ENCODE measurements at regions of chr15 and their contacts with region 1.

Region 1: GRCh38 chr15:85330901-85331588 is 49.4 kb upstream of the AKAP13 start:
- DNase-seq: peak; percentile 96
- H3K4me3 Mint-ChIP-seq: peak overlapping the region; percentile 58
- H3K27ac Mint-ChIP-seq: peak overlapping the region; percentile 95
- H3K4me1 Mint-ChIP-seq: peaks cover 40% of the 10 kb centered on the region
- H3K27me3 Mint-ChIP-seq: no peaks in the 10 kb centered on the region
- CTCF ChIP-seq: peak; percentile 98

Region 2: DNA sequence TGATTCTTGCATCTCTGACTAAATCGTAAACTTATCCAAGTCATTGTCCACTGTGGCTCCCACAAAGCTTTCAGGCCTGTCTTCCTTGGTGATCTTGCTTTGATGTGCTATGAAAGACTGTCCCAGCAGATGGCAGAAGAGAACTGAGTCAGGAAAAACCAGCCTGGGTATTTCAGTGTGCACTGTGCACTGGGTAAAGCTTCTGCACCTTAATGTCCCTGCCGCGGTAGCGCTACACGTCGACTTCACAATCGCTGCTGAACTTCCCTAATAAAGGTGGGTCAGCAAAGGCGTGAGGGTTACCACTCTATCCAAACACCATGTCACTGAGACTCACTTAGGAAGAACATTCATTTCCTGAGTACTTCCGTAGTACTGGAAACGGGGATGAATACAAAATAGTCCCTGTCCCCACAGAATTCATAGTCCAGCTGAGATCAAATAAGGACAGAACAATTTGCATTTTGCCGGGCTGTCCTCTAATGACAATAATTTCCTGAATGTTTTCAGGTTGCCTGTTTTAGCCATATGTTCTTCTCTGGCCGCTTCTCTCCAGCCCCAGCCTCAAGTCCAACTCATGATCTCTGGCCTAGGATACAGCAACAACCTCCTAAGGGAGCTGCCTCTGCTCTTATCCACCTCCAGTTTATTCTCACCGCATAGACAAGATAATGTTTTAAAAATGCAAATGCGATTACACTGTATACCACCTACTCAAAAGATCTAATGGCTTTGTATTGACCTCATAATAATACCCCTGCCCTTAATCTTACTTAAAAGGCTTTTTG is 34.2 kb before region 1 on chr15:
- CTCF ChIA-PET with region 1: interaction called, 39 read pairs
- POLR2A ChIA-PET with region 1: interaction called, 6 read pairs
- intact Hi-C with region 1: loop called (anchors 5 kb)
- DNase-seq: peak; percentile 83
- H3K4me3 Mint-ChIP-seq: no peak overlapping the region
- H3K27ac Mint-ChIP-seq: no peak overlapping the region
- H3K4me1 Mint-ChIP-seq: peaks cover 11% of the 10 kb centered on the region
- H3K27me3 Mint-ChIP-seq: no peaks in the 10 kb centered on the region
- CTCF ChIP-seq: peak; percentile 65

Region 3: DNA sequence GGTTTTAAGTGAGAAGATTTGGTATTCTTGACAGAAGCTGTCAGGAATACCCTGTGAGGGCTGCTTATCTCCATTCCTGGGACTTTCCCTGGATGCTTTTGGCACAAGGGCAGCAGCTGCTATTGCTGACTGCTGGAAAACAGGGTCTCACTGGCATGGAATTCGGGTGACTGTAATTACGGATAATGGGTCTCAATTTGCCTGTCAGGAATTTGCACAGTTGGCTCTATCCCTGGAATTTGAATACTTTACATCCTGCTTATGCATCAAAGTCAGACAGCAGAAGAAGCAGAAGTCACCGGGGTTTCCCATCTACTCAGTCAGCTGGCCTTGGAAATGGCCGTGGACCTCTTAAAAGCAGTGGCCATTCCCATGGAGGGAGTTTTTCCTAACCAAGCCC is 23.4 kb after region 1 on chr15:
- CTCF ChIA-PET with region 1: interaction called, 17 read pairs
- POLR2A ChIA-PET with region 1: interaction called, 8 read pairs
- intact Hi-C with region 1: no loop called
- DNase-seq: no peak
- H3K4me3 Mint-ChIP-seq: no peak overlapping the region
- H3K27ac Mint-ChIP-seq: no peak overlapping the region
- H3K4me1 Mint-ChIP-seq: peaks cover 27% of the 10 kb centered on the region
- H3K27me3 Mint-ChIP-seq: no peaks in the 10 kb centered on the region
- CTCF ChIP-seq: no peak

Region 4: DNA sequence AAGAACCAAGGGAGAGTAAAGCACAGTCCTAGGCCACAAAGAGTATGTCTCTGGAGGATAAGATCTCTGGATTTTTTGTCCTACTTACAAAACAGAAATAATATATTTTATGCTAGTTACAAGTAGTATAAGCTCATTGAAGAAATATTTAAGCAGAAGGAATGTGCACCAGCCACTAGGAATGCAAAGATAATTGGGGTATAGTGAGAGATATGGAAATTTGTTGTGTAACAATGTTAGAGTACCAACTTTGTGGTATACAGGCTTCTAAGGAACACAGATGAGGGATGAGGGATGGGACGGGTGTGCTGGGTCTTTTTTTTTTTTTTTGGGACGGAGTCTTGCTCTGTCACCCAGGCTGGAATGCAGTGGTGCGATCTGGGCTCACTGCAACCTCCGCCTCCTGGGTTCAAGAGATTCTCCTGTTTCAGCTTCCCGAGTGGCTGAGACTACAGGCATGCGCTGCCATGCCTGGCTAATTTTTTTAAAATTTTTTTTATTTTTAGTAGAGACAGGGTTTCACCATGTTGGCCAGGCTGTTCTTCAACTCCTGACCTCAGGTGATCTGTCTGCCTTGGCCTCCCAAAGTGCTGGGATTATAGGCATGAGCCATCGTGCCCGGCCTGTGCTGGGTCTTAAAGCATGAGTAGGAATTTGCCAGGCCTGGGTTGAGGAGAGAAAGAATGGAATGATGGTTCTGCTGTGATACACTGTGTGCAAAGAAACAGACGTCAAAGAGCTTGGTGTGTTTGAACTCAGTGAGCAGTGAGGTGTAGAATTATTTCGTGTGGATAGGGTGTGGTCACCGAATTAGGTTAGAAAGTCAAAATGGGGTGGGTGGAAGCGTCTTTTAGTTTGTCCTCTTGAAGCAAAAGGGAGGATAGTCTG is 76.1 kb after region 1 on chr15:
- CTCF ChIA-PET with region 1: interaction called, 134 read pairs
- POLR2A ChIA-PET with region 1: interaction called, 46 read pairs
- intact Hi-C with region 1: no loop called
- DNase-seq: no peak
- H3K4me3 Mint-ChIP-seq: peak overlapping the region; percentile 21
- H3K27ac Mint-ChIP-seq: peak overlapping the region; percentile 18
- H3K4me1 Mint-ChIP-seq: peaks cover 59% of the 10 kb centered on the region
- H3K27me3 Mint-ChIP-seq: no peaks in the 10 kb centered on the region
- CTCF ChIP-seq: no peak

Region 5: DNA sequence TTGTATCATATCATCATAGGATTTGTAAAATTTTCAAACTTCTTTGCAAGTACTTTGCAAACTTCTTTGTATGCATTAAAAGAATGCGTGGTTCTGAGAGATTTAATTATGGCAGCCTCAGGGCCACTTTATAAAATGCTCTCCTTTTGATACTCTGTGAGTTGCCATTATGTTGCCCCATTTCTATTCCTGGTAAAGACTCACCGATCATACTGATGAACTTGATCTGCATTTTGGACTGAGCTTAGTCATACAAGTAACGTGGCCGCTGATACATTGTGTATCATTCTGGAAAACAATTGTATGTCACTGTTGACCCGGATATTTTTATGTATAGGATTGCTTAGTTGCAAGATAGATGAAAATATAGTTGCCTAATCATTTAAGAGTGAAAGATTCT is 88.1 kb after region 1 on chr15:
- CTCF ChIA-PET with region 1: interaction called, 134 read pairs
- POLR2A ChIA-PET with region 1: interaction called, 46 read pairs
- intact Hi-C with region 1: loop called (anchors 1 kb)
- DNase-seq: peak; percentile 57
- H3K4me3 Mint-ChIP-seq: no peak overlapping the region
- H3K27ac Mint-ChIP-seq: peak overlapping the region; percentile 5
- H3K4me1 Mint-ChIP-seq: peaks cover 62% of the 10 kb centered on the region
- H3K27me3 Mint-ChIP-seq: no peaks in the 10 kb centered on the region
- CTCF ChIP-seq: no peak

Region 6: GRCh38 chr15:85504749-85505676 is 174.0 kb after region 1 on chr15:
- CTCF ChIA-PET with region 1: interaction called, 30 read pairs
- POLR2A ChIA-PET with region 1: interaction called, 7 read pairs
- intact Hi-C with region 1: loop called (anchors 1 kb)
- DNase-seq: peak; percentile 73
- H3K4me3 Mint-ChIP-seq: no peak overlapping the region
- H3K27ac Mint-ChIP-seq: peak overlapping the region; percentile 61
- H3K4me1 Mint-ChIP-seq: peaks cover 26% of the 10 kb centered on the region
- H3K27me3 Mint-ChIP-seq: no peaks in the 10 kb centered on the region
- CTCF ChIP-seq: peak; percentile 45